ENCODE measurements at regions of chr2 and their contacts with region 1.

Region 1: DNA sequence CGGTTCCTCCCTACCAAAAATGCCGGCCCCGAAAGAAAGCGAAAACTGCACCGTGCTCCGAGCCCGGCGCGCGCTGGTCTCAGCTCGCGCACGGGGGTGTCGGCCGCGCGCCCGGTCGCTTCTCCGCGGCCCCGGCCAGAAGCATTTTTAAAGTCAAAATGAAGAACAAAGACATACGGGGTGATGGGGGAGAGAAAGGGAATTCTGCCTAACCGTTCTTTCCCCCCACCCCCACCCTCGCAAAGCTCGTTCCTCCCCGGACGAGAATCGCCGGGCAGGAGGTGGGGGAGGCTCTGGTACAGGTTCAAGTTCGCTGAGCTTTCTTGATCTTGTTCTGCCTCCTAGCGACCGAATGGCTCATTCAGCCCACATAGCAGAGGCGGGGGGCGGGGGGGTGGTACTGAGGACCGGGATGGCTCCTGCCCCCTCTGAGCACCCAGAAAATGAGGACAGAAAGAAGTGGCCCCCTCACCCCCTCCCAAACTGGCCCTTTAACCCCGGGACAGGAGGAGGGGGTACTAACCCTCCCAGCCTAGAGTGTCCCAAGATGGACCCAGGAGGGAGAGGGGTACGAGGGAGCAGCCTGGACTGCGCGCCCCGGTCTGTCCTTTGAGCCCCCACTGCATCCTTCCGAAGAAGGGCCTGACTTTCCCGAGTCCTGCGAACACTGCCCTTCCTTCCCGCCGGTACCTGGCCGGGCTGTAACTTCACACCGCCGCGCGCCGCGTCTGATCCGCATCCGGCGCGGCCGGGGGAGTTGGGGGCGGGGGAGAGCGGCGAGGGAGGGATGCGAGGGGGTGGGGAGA is 3.1 kb downstream of the BCL11A start:
- DNase-seq: peak; percentile 85
- ATAC-seq: peak; percentile 41
- H3K4me3 ChIP-seq: peak overlapping the region; percentile 90
- H3K27ac ChIP-seq: peak overlapping the region; percentile 41
- H3K4me1 ChIP-seq: peaks cover 14% of the 10 kb centered on the region
- H3K27me3 ChIP-seq: peaks cover under 1% of the 10 kb centered on the region; the same call in 1 of the 2 replicates
- CTCF ChIP-seq: peak; percentile 91

Region 2: GRCh38 chr2:59301466-59302402 is 1248.6 kb before region 1 on chr2:
- CTCF ChIA-PET with region 1: interaction called, 9 read pairs
- POLR2A ChIA-PET with region 1: no interaction called
- intact Hi-C with region 1: loop called (anchors 5 kb)
- DNase-seq: peak; percentile 79
- ATAC-seq: peak; percentile 77
- H3K4me3 ChIP-seq: no peak overlapping the region
- H3K27ac ChIP-seq: no peak overlapping the region
- H3K4me1 ChIP-seq: no peaks in the 10 kb centered on the region
- H3K27me3 ChIP-seq: peaks cover 33% of the 10 kb centered on the region
- CTCF ChIP-seq: peak; percentile 71

Region 3: DNA sequence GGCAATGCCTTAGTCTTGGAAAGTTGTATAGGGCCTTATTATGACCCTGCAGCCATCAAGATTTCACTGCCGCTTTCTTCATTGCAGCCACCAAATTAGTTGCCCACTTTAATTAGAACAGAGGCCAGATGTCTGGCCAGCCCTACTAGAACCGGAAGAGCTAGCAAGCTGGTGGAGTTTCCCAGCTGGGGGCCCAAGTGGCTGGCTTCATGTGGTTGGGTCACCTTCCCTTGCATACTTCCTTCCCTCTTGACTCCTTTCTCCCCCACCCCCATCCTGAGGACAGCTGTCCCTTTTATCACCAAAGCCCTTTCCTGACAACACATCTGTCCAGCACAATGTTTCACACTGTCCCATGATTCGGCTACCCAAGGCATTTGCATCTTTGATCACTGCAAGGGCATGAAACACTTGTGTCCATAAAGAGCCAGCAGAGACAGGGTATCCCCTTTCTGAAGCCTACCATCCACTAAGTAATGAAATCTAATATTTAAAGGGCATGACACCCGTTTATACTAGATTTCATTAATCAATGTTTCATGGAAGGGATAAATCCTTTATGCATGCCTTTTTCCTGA is 184.2 kb before region 1 on chr2:
- CTCF ChIA-PET with region 1: no interaction called
- POLR2A ChIA-PET with region 1: no interaction called
- intact Hi-C with region 1: no loop called
- DNase-seq: no peak
- ATAC-seq: no peak
- H3K4me3 ChIP-seq: no peak overlapping the region
- H3K27ac ChIP-seq: no peak overlapping the region
- H3K4me1 ChIP-seq: no peaks in the 10 kb centered on the region
- H3K27me3 ChIP-seq: no peaks in the 10 kb centered on the region
- CTCF ChIP-seq: no peak

Region 4: GRCh38 chr2:60497500-60497899 is 52.9 kb before region 1 on chr2:
- CTCF ChIA-PET with region 1: interaction called, 3 read pairs
- POLR2A ChIA-PET with region 1: no interaction called
- intact Hi-C with region 1: loop called (anchors 1 kb)
- DNase-seq: no peak
- ATAC-seq: 0 out of 2 replicates have a peak, but pooled peaks have one; percentile 38
- H3K4me3 ChIP-seq: no peak overlapping the region
- H3K27ac ChIP-seq: no peak overlapping the region
- H3K4me1 ChIP-seq: no peaks in the 10 kb centered on the region
- H3K27me3 ChIP-seq: no peaks in the 10 kb centered on the region
- CTCF ChIP-seq: no peak; the same call in 1 of the 2 replicates

Region 5: DNA sequence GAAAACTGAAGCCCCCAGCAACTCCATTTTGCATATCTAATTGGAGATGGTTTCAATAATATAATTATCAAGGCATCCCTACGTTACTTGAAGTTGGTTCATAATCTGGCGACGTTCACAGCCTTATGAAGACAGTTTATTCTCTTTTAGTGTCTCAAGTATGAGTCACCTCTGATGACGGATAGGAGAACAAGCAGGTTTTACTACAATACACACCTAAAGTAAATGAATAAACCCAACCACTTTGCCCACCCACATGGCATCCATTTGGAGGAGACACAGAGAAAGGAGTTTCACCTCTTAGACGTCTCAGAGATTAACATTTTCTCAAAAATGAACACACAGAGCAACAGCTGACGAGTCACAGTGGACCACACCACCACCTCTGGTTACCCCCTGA is 37.7 kb before region 1 on chr2:
- CTCF ChIA-PET with region 1: no interaction called
- POLR2A ChIA-PET with region 1: no interaction called
- intact Hi-C with region 1: loop called (anchors 1 kb)
- DNase-seq: peak; percentile 90
- ATAC-seq: peak; percentile 97
- H3K4me3 ChIP-seq: peak overlapping the region; percentile 34; the same call in 1 of the 2 replicates
- H3K27ac ChIP-seq: peak overlapping the region; percentile 83
- H3K4me1 ChIP-seq: peaks cover 35% of the 10 kb centered on the region
- H3K27me3 ChIP-seq: no peaks in the 10 kb centered on the region
- CTCF ChIP-seq: no peak

Region 6: GRCh38 chr2:60533101-60534046 is 17.0 kb before region 1 on chr2:
- CTCF ChIA-PET with region 1: interaction called, 5 read pairs
- POLR2A ChIA-PET with region 1: no interaction called
- intact Hi-C with region 1: loop called (anchors 2 kb)
- DNase-seq: peak; percentile 89
- ATAC-seq: peak; percentile 95
- H3K4me3 ChIP-seq: peak overlapping the region; percentile 38; the same call in 1 of the 2 replicates
- H3K27ac ChIP-seq: peak overlapping the region; percentile 18
- H3K4me1 ChIP-seq: peaks cover 43% of the 10 kb centered on the region
- H3K27me3 ChIP-seq: no peaks in the 10 kb centered on the region
- CTCF ChIP-seq: no peak

Region 7: DNA sequence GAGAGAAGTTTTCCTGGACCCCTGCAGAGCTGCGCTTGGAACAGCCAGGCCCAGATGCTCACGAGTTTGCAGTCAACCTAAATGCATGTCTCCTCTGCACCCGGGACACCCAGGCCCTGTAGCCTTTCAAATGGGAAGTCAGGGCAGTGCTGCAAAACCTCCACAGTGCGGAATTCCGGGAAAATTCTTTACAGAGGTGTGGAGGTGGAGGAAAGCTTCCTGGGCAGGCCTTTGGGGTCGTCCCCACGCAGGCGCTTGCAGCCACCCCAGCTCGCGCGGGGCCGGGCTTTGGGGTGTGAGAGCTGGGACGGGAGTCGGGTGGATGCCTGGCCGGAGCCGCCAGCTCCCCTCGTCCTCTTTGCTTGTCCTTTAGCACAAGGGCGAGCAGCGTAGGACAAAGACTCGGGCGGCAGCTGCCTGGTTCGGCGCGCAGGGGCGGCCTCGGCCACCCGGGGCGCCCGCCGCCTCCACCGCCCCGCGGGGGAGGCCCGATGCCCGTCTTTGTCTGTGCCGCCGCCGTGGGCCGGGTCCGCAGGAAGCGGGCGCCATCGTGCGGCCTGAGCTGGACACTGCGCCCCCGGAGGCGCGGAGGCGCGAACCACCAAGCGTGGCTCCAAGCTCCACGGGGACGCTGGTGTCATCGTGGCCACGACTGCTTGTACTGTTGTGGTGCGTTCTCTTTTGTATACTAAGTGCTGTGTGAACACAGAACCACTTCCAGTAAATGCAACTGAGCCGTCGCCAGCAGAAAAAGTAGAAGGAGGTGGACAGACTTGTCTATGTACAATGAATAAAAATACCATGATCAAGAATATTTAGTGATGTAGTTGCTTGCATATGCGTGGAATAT is 31.3 kb after region 1 on chr2:
- CTCF ChIA-PET with region 1: no interaction called
- POLR2A ChIA-PET with region 1: interaction called, 17 read pairs
- intact Hi-C with region 1: no loop called
- DNase-seq: peak; percentile 73
- ATAC-seq: peak; percentile 97
- H3K4me3 ChIP-seq: peak overlapping the region; percentile 64
- H3K27ac ChIP-seq: no peak overlapping the region
- H3K4me1 ChIP-seq: peaks cover 3% of the 10 kb centered on the region; the same call in 1 of the 2 replicates
- H3K27me3 ChIP-seq: peaks cover 75% of the 10 kb centered on the region
- CTCF ChIP-seq: peak; percentile 93